ENCODE measurements at regions of chr11 and their contacts with region 1.

Region 1: GRCh38 chr11:133650082-133650481 is 117.8 kb upstream of the OPCML start:
- DNase-seq: no peak
- ATAC-seq: peak in 1 of 8 donors; percentile 41
- H3K4me3 ChIP-seq: no peak overlapping the region
- H3K27ac ChIP-seq: no peak overlapping the region
- H3K4me1 ChIP-seq: no peaks in the 10 kb centered on the region
- H3K27me3 ChIP-seq: peaks cover 0 to 6% (median 0%) of the 10 kb centered on the region in 7 donors
- CTCF ChIP-seq: no peak

Region 2: GRCh38 chr11:132559331-132560036 is 1090.6 kb before region 1 on chr11:
- intact Hi-C with region 1: loop called in 1 of 10 experiments (anchors 5 kb)
- DNase-seq: no peak
- ATAC-seq: no peak
- H3K4me3 ChIP-seq: no peak overlapping the region
- H3K27ac ChIP-seq: no peak overlapping the region
- H3K4me1 ChIP-seq: no peaks in the 10 kb centered on the region
- H3K27me3 ChIP-seq: peaks cover 0 to 6% (median 0%) of the 10 kb centered on the region in 7 donors
- CTCF ChIP-seq: no peak

Measured in heart right ventricle (tissue), 16 donors.